ENCODE measurements at regions of chr3 and their contacts with region 1.

Region 1: DNA sequence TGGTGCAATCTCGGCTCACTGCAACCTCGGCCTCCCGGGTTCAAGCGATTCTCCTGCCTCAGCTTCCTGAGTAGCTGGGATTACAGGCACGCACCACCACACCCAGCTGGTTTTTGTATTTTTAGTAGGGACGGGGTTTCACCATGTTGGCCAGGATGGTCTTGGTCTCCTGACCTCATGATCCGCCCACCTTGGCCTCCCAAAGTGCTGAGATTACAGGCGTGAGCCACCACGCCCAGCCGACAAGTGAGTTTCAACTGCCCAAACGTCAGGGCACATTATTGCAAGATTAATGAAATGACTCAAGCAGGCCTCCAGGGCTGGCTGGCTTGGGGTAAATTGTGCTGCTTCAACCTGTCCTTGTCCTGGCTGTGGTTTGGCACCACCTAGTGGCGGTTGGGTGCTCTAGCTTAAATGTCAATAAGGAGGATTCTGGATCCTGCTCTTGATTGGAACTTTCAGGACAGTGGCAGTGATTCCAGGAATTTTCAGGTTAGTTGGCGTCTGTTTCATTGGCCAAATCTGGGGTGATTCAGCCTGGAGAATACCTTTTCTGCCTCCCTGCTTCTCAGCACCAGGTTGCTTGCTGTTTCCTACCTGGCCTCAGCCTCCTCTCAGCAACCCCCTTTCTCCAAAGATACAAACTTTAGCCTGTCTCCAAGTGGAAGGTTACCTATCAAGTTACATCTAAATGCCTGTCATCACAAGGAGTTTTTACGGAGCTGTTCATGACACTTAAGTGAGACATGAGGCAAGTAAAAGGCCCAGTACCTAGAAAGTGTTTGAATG is 32.4 kb upstream of the SACM1L start:
- DNase-seq: peak; percentile 93 to 98 (median 97)
- H3K4me3 ChIP-seq: no peak overlapping the region
- H3K27ac ChIP-seq: no peak overlapping the region
- H3K4me1 ChIP-seq: peaks cover 3 to 36% (median 24%) of the 10 kb centered on the region in 4 experiments
- H3K27me3 ChIP-seq: no peaks in the 10 kb centered on the region

Region 2: DNA sequence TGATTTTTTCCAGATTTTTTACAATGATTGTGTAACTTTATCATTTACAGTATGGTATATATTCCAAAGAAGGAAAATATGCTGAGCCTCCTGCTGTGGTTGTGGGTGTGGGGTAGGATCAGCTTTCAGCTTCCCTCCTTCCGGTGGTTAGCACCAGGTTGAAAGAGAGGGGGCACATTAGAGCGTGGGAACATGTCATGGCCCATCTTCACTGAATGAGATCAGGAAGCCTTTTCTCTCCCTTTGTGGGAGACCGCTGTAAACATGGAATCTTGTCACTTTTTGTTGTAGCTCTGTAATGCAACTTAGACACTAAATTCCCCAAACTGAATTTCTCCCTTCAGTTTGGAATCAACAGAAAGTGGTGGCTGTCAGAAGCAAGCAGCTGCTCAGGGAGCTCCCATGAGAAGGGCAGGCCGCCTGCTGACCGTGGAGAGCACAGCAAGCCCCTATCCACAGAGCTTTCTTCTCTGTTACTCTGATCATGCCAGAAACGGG is 148.9 kb before region 1 on chr3:
- CTCF ChIA-PET with region 1: interaction called, 163 read pairs
- POLR2A ChIA-PET with region 1: interaction called, 3 read pairs
- DNase-seq: peak; percentile 17 to 63 (median 61)
- H3K4me3 ChIP-seq: no peak overlapping the region
- H3K27ac ChIP-seq: no peak overlapping the region
- H3K4me1 ChIP-seq: peaks cover 0 to 12% (median 8%) of the 10 kb centered on the region in 4 experiments
- H3K27me3 ChIP-seq: no peaks in the 10 kb centered on the region

Region 3: GRCh38 chr3:45516829-45517228 is 139.9 kb before region 1 on chr3:
- CTCF ChIA-PET with region 1: interaction called, 163 read pairs
- POLR2A ChIA-PET with region 1: no interaction called
- DNase-seq: no peak
- H3K4me3 ChIP-seq: no peak overlapping the region
- H3K27ac ChIP-seq: no peak overlapping the region
- H3K4me1 ChIP-seq: peaks cover 0 to 3% (median 0%) of the 10 kb centered on the region in 4 experiments
- H3K27me3 ChIP-seq: no peaks in the 10 kb centered on the region

Region 4: GRCh38 chr3:45546716-45547701 is 109.8 kb before region 1 on chr3:
- CTCF ChIA-PET with region 1: interaction called, 10 read pairs
- POLR2A ChIA-PET with region 1: interaction called, 5 read pairs
- DNase-seq: no peak
- H3K4me3 ChIP-seq: no peak overlapping the region
- H3K27ac ChIP-seq: no peak overlapping the region
- H3K4me1 ChIP-seq: peaks cover 0 to 31% (median 12%) of the 10 kb centered on the region in 4 experiments
- H3K27me3 ChIP-seq: no peaks in the 10 kb centered on the region

Region 5: GRCh38 chr3:45593708-45594609 is 62.8 kb before region 1 on chr3:
- CTCF ChIA-PET with region 1: interaction called, 47 read pairs
- POLR2A ChIA-PET with region 1: interaction called, 3 read pairs
- DNase-seq: peak; percentile 59 to 84 (median 75)
- H3K4me3 ChIP-seq: peak overlapping the region; percentile 68 to 91 (median 81)
- H3K27ac ChIP-seq: peak overlapping the region in 1 of 2 experiments; percentile 83
- H3K4me1 ChIP-seq: peaks cover 4 to 70% (median 59%) of the 10 kb centered on the region in 4 experiments
- H3K27me3 ChIP-seq: no peaks in the 10 kb centered on the region

Region 6: DNA sequence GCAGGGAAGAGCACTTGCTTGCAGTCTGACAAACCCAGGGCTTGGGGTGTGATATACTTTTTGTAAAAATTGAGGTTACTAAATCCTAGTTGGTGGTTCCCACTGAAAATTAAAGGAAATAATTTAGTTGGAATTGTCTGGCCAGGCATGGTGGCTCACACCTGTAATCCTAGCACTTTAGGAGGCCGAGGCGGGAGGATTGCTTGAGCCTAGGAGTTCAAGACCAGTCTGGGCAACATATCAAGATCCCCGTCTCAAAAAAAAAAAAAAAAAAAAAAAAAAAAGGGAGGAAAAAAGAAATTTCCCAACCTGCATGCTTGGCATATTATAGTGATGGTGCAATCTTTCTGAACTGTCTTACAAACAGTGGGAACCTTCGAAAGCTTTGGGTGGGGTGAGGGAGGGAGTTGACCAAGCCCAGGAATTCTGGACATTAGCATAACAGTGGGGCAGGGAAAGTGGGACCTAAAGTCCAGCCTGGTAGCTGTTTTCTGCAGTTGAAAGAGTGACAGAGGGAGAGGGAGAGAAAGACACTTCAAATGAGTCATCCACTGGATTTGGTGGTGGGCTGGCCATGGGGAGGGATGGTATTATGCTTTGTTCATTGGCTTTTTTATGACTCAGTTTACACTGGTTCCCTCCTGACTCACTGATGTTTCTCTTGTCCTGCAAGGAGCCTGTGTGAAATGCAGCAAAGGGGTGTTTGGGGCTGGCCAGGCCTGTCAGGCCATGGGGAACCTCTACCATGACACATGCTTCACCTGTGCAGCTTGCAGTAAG is 21.1 kb before region 1 on chr3:
- CTCF ChIA-PET with region 1: interaction called, 21 read pairs
- POLR2A ChIA-PET with region 1: interaction called, 4 read pairs
- DNase-seq: no peak
- H3K4me3 ChIP-seq: no peak overlapping the region
- H3K27ac ChIP-seq: no peak overlapping the region
- H3K4me1 ChIP-seq: peaks cover 26 to 57% (median 50%) of the 10 kb centered on the region in 4 experiments
- H3K27me3 ChIP-seq: no peaks in the 10 kb centered on the region

Region 7: GRCh38 chr3:45890405-45890804 is 233.6 kb after region 1 on chr3:
- CTCF ChIA-PET with region 1: no interaction called
- POLR2A ChIA-PET with region 1: no interaction called
- DNase-seq: peak in 2 of 3 donors; percentile 63
- H3K4me3 ChIP-seq: no peak overlapping the region
- H3K27ac ChIP-seq: no peak overlapping the region
- H3K4me1 ChIP-seq: peaks cover 18 to 41% (median 30%) of the 10 kb centered on the region in 4 experiments
- H3K27me3 ChIP-seq: no peaks in the 10 kb centered on the region